Activated naive CD4-positive, alpha-beta T cell treated with anti-CD3 and anti-CD28 coated beads for 36 hours (primary cell): ENCODE measurements at regions of chr18 and their contacts with region 1.

Region 1: DNA sequence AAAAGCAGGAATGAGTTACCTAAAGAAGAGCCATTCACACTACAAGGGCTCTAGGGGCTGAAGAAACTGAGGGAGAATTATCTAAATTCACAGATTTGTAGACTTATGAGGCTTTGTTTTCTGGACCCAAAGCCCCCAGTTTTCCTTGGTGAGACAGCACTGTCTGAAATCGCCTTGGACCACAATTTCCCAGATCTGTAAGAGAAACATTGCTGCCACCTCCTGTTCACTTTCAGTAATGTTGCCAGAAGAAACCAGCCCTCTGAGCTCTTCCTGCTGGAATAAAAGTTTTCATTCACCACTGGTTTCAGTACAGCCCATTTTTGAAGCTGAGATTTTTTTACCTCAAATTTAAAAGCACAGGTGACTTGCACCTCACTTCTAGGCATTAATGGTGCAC is 169.2 kb downstream of the CDH20 start:
- DNase-seq: peak; percentile 21
- H3K4me3 Mint-ChIP-seq: no peak overlapping the region
- H3K27ac Mint-ChIP-seq: no peak overlapping the region
- H3K4me1 Mint-ChIP-seq: no peaks in the 10 kb centered on the region
- H3K27me3 Mint-ChIP-seq: peaks cover 18% of the 10 kb centered on the region

Region 2: GRCh38 chr18:59988098-59988706 is 1514.3 kb before region 1 on chr18:
- CTCF ChIA-PET with region 1: interaction called, 12 read pairs
- intact Hi-C with region 1: loop called (anchors 1 kb)
- DNase-seq: peak; percentile 74
- H3K4me3 Mint-ChIP-seq: no peak overlapping the region
- H3K27ac Mint-ChIP-seq: no peak overlapping the region
- H3K4me1 Mint-ChIP-seq: no peaks in the 10 kb centered on the region
- H3K27me3 Mint-ChIP-seq: peaks cover 18% of the 10 kb centered on the region

Region 3: DNA sequence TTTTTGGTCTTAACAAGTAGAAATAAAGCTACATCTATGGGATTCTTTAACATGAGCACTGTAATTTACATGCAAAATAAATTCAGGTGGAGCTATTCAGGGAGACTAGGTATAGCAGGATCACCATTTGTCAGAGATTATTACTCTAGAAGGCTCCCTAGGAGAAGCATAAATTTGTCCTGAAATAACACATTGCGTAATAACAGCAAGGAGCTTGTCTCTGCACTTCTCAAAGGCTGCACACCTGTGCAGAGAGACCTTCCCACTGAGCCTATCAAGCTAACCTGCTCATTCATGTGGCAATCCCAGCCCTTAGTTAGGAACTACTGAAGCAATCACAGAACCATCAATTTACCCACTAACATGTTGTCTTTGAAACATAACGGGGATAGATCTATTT is 692.5 kb before region 1 on chr18:
- CTCF ChIA-PET with region 1: no interaction called
- intact Hi-C with region 1: loop called (anchors 5 kb)
- DNase-seq: no peak
- H3K4me3 Mint-ChIP-seq: no peak overlapping the region
- H3K27ac Mint-ChIP-seq: no peak overlapping the region
- H3K4me1 Mint-ChIP-seq: no peaks in the 10 kb centered on the region
- H3K27me3 Mint-ChIP-seq: no peaks in the 10 kb centered on the region

Region 4: GRCh38 chr18:61085761-61086160 is 416.7 kb before region 1 on chr18:
- CTCF ChIA-PET with region 1: interaction called, 3 read pairs
- intact Hi-C with region 1: loop called (anchors 2 kb)
- DNase-seq: no peak
- H3K4me3 Mint-ChIP-seq: no peak overlapping the region
- H3K27ac Mint-ChIP-seq: no peak overlapping the region
- H3K4me1 Mint-ChIP-seq: no peaks in the 10 kb centered on the region
- H3K27me3 Mint-ChIP-seq: no peaks in the 10 kb centered on the region

Region 5: GRCh38 chr18:61322265-61322873 is 180.1 kb before region 1 on chr18:
- CTCF ChIA-PET with region 1: interaction called, 14 read pairs
- intact Hi-C with region 1: loop called (anchors 1 kb)
- DNase-seq: peak; percentile 58
- H3K4me3 Mint-ChIP-seq: no peak overlapping the region
- H3K27ac Mint-ChIP-seq: no peak overlapping the region
- H3K4me1 Mint-ChIP-seq: no peaks in the 10 kb centered on the region
- H3K27me3 Mint-ChIP-seq: peaks cover 4% of the 10 kb centered on the region